ENCODE measurements at regions of chr10 and their contacts with region 1.

Region 1: DNA sequence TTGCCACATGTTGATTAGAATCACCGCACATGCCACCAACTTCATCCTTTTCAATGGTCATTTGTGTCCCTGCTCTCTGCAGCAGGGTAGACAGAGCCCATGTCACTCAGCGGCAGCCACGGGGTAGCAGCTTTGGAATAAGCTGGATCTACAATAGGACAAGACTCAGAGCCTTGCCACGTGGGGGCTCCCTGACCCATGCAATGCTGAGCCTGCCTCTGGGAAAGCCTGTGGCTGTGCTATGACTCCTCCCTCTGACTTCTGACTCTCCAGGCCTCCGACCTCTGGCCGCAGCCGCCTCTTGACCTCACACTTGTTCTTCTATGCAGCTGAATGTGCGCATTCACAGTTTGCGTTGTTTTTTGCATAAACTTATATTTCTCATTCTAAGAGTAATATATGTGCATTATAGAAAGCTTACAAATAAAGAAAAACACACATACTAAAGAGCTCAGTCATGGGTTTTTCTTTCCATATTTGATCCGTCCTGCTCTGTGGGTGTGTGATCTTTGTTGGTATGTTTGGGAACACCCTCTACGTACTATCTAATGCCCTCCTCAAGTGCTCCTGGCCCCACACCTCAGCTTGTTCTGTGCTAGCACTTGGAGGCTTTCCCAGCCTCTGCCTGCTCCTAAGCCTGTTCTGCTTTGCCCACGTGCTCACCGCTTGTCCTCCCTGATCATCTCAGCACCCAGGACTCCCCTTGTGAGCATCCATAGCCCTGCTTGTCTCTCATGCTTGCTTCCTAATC is 198.0 kb upstream of the MKI67 start:
- DNase-seq: peak; percentile 80
- ATAC-seq: peak; percentile 92

Region 2: GRCh38 chr10:128530301-128530700 is 206.0 kb after region 1 on chr10:
- intact Hi-C with region 1: loop called (anchors 5 kb)
- DNase-seq: no peak
- ATAC-seq: no peak

Region 3: GRCh38 chr10:128540781-128541761 is 216.8 kb after region 1 on chr10:
- intact Hi-C with region 1: no loop called
- DNase-seq: peak; percentile 72
- ATAC-seq: peak; percentile 56

Region 4: DNA sequence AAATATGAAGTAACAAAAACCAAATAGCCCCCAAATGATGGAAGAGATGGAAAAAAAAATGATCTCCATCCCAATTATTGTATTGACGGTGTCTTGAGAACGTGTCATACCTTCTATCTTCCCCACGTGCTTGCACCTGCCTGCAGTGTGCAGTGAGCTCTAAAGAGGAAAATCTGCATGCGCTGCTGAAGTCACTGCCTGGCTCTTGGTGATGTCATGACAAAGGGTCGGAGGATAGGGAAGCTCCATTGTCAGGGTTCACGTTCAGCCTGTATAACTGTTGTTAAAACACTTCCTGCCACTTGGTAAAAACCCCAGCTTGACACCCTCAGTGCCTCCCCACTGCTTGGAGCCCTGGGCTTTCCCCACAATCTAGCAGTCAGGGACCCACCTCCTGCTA is 351.2 kb after region 1 on chr10:
- intact Hi-C with region 1: no loop called
- DNase-seq: no peak
- ATAC-seq: no peak